Head of caudate nucleus (tissue), 42 donors: ENCODE measurements at regions of chr17 and their contacts with region 1.

Region 1: GRCh38 chr17:80203471-80203963 is 16.6 kb downstream of the SGSH start:
- DNase-seq: peak in 2 of 42 donors; percentile 38 to 51

Region 2: DNA sequence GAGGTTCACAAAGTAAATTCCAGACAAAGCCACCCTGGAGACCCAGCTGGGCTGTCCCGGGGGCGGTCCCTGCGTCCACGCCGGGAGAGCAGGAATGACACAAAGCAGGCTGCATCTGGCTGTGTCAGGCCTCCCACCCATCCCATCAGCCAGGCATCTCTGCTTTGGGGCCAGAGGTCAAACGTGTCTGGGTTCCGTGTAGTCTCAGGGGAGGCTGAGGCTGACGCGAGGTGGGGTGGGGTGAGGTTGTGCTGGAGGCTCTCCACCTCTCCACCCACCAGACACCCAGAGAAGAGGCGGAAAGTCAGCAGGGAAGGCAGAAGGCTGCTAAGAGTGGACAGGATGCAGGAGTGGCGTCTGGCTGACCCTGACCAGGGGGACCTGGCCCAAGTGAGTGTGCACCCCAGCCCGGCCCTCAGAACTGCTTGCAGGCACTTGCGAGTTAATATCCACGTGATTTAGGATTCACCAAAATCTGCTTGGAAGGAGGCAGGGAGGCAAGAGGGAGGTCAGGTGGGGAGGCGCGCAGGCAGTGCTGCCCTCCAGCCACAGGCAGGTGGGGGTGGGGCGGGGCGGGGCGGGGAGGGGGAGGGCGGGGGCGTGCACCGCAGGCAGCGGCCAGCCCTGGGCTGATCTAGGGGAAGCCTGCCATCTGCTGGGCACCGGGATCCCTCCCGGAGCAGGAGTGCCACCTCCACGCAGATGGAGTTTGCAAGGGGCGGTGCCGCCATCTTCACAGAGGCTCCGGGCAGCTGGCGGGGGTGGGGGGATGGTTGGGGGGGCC is 212.2 kb before region 1 on chr17:
- intact Hi-C with region 1: no loop called
- DNase-seq: peak; percentile 78 to 95 (median 89)

Region 3: DNA sequence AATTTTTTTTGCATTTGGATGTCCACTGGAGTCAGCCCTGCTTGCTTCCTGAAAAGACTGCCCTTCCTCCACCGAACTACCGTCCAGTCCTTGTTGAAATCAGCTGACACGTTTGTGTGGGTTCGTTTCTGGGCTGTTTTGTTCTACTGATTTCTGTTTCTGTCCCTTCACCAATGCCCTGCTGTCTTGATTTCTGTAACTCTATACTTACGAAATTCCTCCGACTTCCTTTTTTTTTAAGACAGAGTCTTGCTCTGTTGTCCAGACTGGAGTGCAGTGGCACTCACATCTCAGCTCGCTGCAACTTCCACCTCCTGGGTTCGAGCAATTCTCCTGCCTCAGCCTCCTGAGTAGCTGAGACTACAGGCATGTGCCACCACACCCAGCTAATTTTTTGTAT is 110.6 kb before region 1 on chr17:
- intact Hi-C with region 1: loop called (anchors 10 kb)
- DNase-seq: peak in 9 of 42 donors; percentile 18 to 53 (median 32)

Region 4: DNA sequence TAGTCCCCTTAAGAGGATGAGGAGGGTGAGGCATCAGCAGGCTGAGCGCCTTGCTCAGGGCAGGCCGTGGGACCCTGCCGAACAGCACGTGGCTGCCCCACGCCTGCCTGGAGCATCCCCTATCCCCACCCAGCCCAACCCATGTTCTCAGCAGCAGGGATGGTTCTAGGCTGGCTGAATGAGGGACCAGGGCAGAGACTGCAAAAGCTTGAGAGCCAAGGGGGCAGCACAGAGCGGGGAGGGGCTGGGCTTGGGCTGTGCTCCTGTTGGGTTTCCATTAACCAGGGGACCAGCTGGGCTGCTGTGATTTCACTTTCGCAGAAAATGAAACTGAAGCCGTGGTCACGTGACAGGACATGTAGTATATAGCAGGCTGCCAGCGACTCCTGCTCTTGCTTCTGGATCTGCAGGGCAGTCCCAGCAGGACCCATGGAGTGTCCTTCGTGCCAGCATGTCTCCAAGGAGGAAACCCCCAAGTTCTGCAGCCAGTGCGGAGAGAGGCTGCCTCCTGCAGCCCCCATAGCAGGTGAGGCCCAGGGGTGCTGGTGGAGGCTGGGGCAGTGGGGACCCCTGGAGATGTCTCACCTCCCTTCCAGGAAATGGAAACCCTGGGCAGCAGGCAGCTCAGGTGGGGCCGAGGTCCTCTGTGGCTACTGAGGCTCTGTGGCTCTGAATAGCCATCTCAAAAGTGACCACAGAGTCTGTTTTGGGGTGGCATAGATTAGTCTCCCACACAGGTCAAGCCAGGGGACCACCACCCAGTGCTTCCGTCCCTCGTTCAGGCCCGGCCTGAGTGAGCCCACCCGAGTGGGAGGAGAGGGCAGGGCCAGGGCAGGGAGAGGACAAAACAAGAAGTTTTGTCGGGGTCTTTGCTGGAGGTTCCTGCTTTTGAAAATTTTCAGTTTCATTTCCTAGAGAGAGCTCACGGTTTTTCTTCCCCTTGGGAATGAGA is 60.0 kb after region 1 on chr17:
- intact Hi-C with region 1: no loop called
- DNase-seq: peak in 30 of 42 donors; percentile 15 to 78 (median 49)